ENCODE measurements at regions of chr16 and their contacts with region 1.

Region 1: GRCh38 chr16:3106205-3106928 is 6.0 kb upstream of the ZNF205 start:
- DNase-seq: no peak
- ATAC-seq: peak; percentile 95
- H3K4me3 ChIP-seq: peak overlapping the region; percentile 78
- H3K27ac ChIP-seq: peak overlapping the region; percentile 74
- H3K4me1 ChIP-seq: peaks cover 10% of the 10 kb centered on the region
- H3K27me3 ChIP-seq: no peaks in the 10 kb centered on the region
- CTCF ChIP-seq: no peak
- EP300 ChIP-seq: no peak
- POLR2A ChIP-seq: peak; percentile 90
- RAD21 ChIP-seq: no peak

Region 2: DNA sequence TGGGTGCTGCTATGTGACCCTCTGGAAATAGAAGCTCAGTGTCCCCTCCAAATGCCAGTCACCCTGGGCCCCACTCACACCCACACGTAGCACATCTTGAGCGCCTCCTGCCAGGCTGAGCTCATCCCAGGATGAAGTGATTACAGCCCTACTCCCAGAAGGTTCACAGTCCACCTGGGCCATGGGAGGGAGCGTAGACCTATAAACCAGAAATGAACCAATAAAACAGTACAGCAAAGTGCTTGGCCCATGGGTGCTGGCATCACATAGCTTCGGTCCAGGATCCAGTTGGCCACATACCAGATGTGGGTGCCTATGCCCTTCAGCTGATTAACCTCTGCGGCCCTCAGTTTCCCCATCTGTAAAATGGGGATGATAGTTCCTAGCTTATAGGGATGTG is 67.5 kb before region 1 on chr16:
- CTCF ChIA-PET with region 1: no interaction called
- POLR2A ChIA-PET with region 1: no interaction called
- RAD21 ChIA-PET with region 1: no interaction called
- SMC1A ChIA-PET with region 1: no interaction called
- in situ Hi-C with region 1: no loop called
- intact Hi-C with region 1: no loop called
- DNase-seq: no peak
- ATAC-seq: no peak
- H3K4me3 ChIP-seq: no peak overlapping the region
- H3K27ac ChIP-seq: no peak overlapping the region
- H3K4me1 ChIP-seq: no peaks in the 10 kb centered on the region
- H3K27me3 ChIP-seq: peaks cover 8 to 19% of the 10 kb centered on the region in 2 experiments; a peak in 3 of 4 replicates
- CTCF ChIP-seq: no peak
- EP300 ChIP-seq: no peak
- POLR2A ChIP-seq: no peak
- RAD21 ChIP-seq: no peak

Region 3: GRCh38 chr16:3118204-3118806 is 11.9 kb after region 1 on chr16:
- CTCF ChIA-PET with region 1: interaction called, 10 read pairs
- POLR2A ChIA-PET with region 1: interaction called, 13 read pairs
- RAD21 ChIA-PET with region 1: no interaction called
- SMC1A ChIA-PET with region 1: interaction called, 4 read pairs
- in situ Hi-C with region 1: no loop called
- intact Hi-C with region 1: no loop called
- DNase-seq: no peak
- ATAC-seq: no peak
- H3K4me3 ChIP-seq: no peak overlapping the region
- H3K27ac ChIP-seq: no peak overlapping the region
- H3K4me1 ChIP-seq: peaks cover 2% of the 10 kb centered on the region
- H3K27me3 ChIP-seq: no peaks in the 10 kb centered on the region
- CTCF ChIP-seq: no peak
- EP300 ChIP-seq: no peak
- POLR2A ChIP-seq: no peak
- RAD21 ChIP-seq: no peak

Region 4: GRCh38 chr16:3256146-3256865 is 149.9 kb after region 1 on chr16 and contains the start of gene MEFV:
- CTCF ChIA-PET with region 1: no interaction called
- POLR2A ChIA-PET with region 1: no interaction called
- RAD21 ChIA-PET with region 1: no interaction called
- SMC1A ChIA-PET with region 1: no interaction called
- in situ Hi-C with region 1: no loop called
- intact Hi-C with region 1: no loop called
- DNase-seq: no peak
- ATAC-seq: no peak
- H3K4me3 ChIP-seq: no peak within 1 kb of the TSS
- H3K27ac ChIP-seq: no peak within 1 kb of the TSS
- H3K4me1 ChIP-seq: no peaks in the 10 kb centered on the region
- H3K27me3 ChIP-seq: no peaks in the 10 kb centered on the region
- CTCF ChIP-seq: no peak
- EP300 ChIP-seq: no peak
- POLR2A ChIP-seq: no peak
- RAD21 ChIP-seq: no peak
- polyA plus RNA-seq, gene MEFV: not detected

Region 5: GRCh38 chr16:3328643-3329042 is 222.3 kb after region 1 on chr16:
- CTCF ChIA-PET with region 1: no interaction called
- POLR2A ChIA-PET with region 1: no interaction called
- RAD21 ChIA-PET with region 1: no interaction called
- SMC1A ChIA-PET with region 1: no interaction called
- in situ Hi-C with region 1: no loop called
- intact Hi-C with region 1: no loop called
- DNase-seq: no peak
- ATAC-seq: no peak
- H3K4me3 ChIP-seq: no peak overlapping the region
- H3K27ac ChIP-seq: no peak overlapping the region
- H3K4me1 ChIP-seq: no peaks in the 10 kb centered on the region
- H3K27me3 ChIP-seq: no peaks in the 10 kb centered on the region
- CTCF ChIP-seq: no peak
- EP300 ChIP-seq: no peak
- POLR2A ChIP-seq: no peak
- RAD21 ChIP-seq: no peak